Naive thymus-derived CD4-positive, alpha-beta T cell (primary cell): ENCODE measurements at regions of chrX and their contacts with region 1.

Region 1: DNA sequence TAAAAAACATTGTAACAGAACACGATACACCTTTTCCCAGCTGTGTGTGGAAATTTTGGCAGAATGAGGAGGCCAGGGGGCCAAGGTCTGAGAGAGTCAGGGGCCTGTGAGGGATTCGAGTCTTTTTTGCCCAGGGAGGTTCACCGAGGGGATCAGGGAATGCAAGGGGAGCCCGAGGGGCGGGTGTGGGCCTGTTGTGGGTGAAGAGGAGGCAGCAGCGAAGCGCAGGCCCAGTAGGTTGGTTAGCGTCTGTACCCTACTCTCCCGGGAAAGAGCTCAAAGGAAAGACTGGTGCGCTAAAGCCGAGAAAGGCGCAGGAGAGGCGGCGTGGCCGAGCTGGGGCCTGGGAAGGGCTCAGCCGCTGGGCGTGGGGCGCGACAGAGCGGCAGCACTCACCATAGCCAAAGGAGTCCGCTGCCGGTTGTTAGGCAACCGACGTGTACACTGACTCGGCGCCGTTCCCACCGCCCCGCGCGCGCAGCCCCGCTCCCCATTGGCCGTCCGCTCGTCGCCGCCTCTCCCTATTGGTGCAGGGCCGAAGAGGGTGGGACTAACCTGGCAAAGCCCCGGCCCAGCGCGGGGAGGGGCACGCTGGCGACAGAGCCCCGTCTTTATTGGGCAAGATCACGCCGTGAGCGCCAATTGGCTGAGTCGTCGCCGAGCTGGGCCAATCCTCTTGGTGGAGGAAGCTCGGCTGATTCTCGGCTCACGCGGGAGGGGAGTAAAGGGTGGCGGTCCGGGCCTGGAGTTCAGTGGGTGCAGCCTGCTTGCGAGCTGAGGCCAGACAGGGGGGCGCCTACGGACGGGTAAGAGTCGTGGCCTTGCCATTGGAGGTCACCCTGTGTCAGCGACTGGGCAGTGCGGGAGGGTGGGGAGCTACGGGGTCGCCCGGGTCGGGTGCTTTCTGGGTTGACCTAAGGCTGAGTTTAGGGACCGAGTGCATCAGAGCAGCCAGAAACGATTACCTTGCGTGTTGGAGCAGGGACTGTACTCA is at the starts of genes CETN2 and NSDHL:
- DNase-seq: peak; percentile 83 to 95 (median 92)
- ATAC-seq: peak; percentile 98
- H3K4me3 ChIP-seq: peak within 1 kb of the TSS; percentile 67
- H3K4me3 Mint-ChIP-seq: peak within 1 kb of the TSS; percentile 87 to 98 (median 92)
- H3K27ac ChIP-seq: peak within 1 kb of the TSS; percentile 82
- H3K27ac Mint-ChIP-seq: peak within 1 kb of the TSS; percentile 52 to 98 (median 94)
- H3K4me1 ChIP-seq: peaks cover 6 to 9% of the 10 kb centered on the region in 2 donors
- H3K4me1 Mint-ChIP-seq: peaks cover 11 to 28% (median 26%) of the 10 kb centered on the region in 7 donors
- H3K27me3 ChIP-seq: no peaks in the 10 kb centered on the region
- H3K27me3 Mint-ChIP-seq: no peaks in the 10 kb centered on the region
- total RNA-seq, gene CETN2: 7.0 to 10.9 (median 7.6) TPM
- total RNA-seq, gene NSDHL: 3.3 to 13.9 (median 7.2) TPM

Region 2: DNA sequence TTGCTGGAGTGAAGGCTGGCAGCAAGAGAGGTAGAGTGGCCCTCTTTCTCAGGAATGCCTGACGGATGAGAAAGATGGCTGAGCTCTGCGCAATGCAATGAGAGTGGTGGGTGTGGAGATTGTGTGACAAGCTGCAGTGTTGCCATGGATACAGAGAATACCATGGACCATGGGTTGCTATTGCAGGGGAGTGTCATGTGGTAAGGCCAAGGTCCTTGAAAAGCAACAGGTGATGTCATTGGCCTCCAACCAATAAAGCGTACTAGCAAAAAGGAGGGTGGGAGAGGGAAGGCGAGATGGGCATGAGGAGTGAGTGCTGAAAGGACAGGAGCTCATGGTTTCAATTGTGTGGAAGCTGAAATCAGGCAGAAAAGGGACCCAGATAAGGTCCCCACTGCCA is 161.5 kb after region 1 on chrX:
- CTCF ChIA-PET with region 1: no interaction called
- POLR2A ChIA-PET with region 1: no interaction called
- intact Hi-C with region 1: no loop called
- DNase-seq: no peak
- ATAC-seq: no peak
- H3K4me3 ChIP-seq: no peak overlapping the region
- H3K4me3 Mint-ChIP-seq: peak overlapping the region in 2 of 10 donors; percentile 11 to 14
- H3K27ac ChIP-seq: no peak overlapping the region
- H3K27ac Mint-ChIP-seq: peak overlapping the region in 2 of 9 donors; percentile 18 to 23
- H3K4me1 ChIP-seq: no peaks in the 10 kb centered on the region
- H3K4me1 Mint-ChIP-seq: peaks cover 0 to 28% (median under 1%) of the 10 kb centered on the region in 7 donors
- H3K27me3 ChIP-seq: no peaks in the 10 kb centered on the region
- H3K27me3 Mint-ChIP-seq: no peaks in the 10 kb centered on the region

Region 3: GRCh38 chrX:153333768-153334645 is 503.4 kb after region 1 on chrX and contains the start of gene ZNF275:
- CTCF ChIA-PET with region 1: no interaction called
- POLR2A ChIA-PET with region 1: no interaction called
- intact Hi-C with region 1: loop called in 1 of 2 experiments (anchors 5 kb)
- DNase-seq: peak; percentile 69 to 85 (median 81)
- ATAC-seq: peak; percentile 99
- H3K4me3 ChIP-seq: peak within 1 kb of the TSS; percentile 56
- H3K4me3 Mint-ChIP-seq: peak within 1 kb of the TSS; percentile 71 to 93 (median 86)
- H3K27ac ChIP-seq: peak within 1 kb of the TSS; percentile 82
- H3K27ac Mint-ChIP-seq: peak within 1 kb of the TSS; percentile 76 to 87 (median 84)
- H3K4me1 ChIP-seq: peaks cover 0 to 34% of the 10 kb centered on the region in 2 donors
- H3K4me1 Mint-ChIP-seq: peaks cover 17 to 48% (median 43%) of the 10 kb centered on the region in 7 donors
- H3K27me3 ChIP-seq: no peaks in the 10 kb centered on the region
- H3K27me3 Mint-ChIP-seq: peaks cover 0 to 3% (median 0%) of the 10 kb centered on the region in 5 donors
- total RNA-seq, gene ZNF275: 14.6 to 29.9 (median 18.5) TPM